Esophagus squamous epithelium (tissue), 5 donors: ENCODE measurements at regions of chr10 and their contacts with region 1.

Region 1: GRCh38 chr10:34985823-34986222 is 104.3 kb downstream of the CUL2 start:
- DNase-seq: no peak
- H3K4me3 ChIP-seq: no peak overlapping the region
- H3K27ac ChIP-seq: no peak overlapping the region
- H3K4me1 ChIP-seq: peaks cover 3 to 39% (median 6%) of the 10 kb centered on the region in 3 donors
- H3K27me3 ChIP-seq: no peaks in the 10 kb centered on the region
- CTCF ChIP-seq: peak in 2 of 6 experiments; percentile 35 to 45
- POLR2A ChIP-seq: no peak

Region 2: DNA sequence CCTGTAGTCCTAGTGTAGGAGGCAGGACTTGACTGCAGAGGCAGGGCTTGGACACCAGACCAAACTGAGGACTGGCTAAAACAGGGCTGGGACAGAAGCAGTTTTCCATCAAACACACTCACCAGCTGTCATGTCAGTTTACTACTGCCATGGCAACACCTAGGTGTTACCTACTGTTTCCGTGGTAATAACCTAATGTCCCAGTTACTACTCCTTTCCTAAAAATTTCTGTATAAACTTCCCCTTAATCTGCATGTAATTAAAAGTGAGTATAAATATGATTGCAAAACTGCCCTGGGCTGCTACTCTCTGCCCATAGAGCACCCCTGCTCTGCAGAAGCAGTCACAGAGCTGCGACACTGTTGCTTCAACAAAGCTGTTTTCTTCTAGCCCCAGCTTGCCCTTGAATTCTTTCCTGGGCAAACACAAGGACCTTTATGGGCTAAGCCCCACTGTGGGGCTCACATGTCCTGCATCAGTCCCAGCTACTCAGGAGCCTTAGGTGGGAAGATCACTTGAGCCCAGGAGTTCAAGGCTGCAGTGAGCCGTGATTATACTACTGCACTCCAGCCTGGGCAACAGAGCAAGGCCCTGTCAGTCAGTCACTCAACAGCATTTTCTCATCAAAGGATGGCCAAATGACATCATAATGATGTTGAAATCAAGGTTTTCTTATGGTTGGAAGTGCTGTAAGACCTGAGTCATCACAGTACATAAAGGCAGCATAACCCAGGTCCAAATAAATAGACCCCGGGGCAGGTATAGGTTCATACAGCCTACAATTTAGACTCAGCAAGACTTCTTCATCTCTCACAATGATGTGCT is 512.0 kb before region 1 on chr10:
- intact Hi-C with region 1: no loop called
- DNase-seq: no peak
- H3K4me3 ChIP-seq: no peak overlapping the region
- H3K27ac ChIP-seq: no peak overlapping the region
- H3K4me1 ChIP-seq: peaks cover 0 to 10% (median 0%) of the 10 kb centered on the region in 3 donors
- H3K27me3 ChIP-seq: no peaks in the 10 kb centered on the region
- CTCF ChIP-seq: no peak
- POLR2A ChIP-seq: no peak

Region 3: GRCh38 chr10:34666008-34666705 is 319.7 kb before region 1 on chr10:
- intact Hi-C with region 1: loop called (anchors 10 kb)
- DNase-seq: no peak
- H3K4me3 ChIP-seq: no peak overlapping the region
- H3K27ac ChIP-seq: peak overlapping the region; percentile 55 to 81 (median 62)
- H3K4me1 ChIP-seq: peaks cover 5 to 63% (median 9%) of the 10 kb centered on the region in 3 donors
- H3K27me3 ChIP-seq: no peaks in the 10 kb centered on the region
- CTCF ChIP-seq: peak in 5 of 6 experiments; percentile 31 to 66 (median 47)
- POLR2A ChIP-seq: no peak

Region 4: GRCh38 chr10:34933676-34934075 is 52.1 kb before region 1 on chr10:
- intact Hi-C with region 1: no loop called
- DNase-seq: no peak
- H3K4me3 ChIP-seq: no peak overlapping the region
- H3K27ac ChIP-seq: peak overlapping the region in 2 of 4 donors; percentile 67 to 81
- H3K4me1 ChIP-seq: peaks cover 0 to 29% (median 8%) of the 10 kb centered on the region in 3 donors
- H3K27me3 ChIP-seq: no peaks in the 10 kb centered on the region
- CTCF ChIP-seq: no peak
- POLR2A ChIP-seq: no peak

Region 5: DNA sequence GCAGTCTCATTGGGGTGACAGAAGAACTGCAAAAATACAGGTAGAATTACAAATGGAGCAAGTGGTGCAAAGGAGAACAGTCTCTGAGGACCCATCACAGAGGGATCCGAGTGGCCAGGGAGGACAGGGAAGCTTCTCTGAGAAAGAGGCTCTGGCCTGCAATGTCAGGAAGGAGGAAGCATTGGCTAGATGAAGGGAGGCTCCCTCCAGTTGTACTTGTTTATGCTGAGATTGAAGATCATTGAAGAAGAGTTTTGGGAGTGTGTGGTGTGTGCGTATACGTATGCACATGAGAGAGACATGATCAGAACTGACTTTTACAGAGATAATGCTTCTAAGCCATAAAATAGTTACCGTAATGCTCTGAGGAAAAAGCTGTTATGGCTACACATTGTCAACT is 931.0 kb after region 1 on chr10:
- intact Hi-C with region 1: no loop called
- DNase-seq: no peak
- H3K4me3 ChIP-seq: no peak overlapping the region
- H3K27ac ChIP-seq: no peak overlapping the region
- H3K4me1 ChIP-seq: peaks cover 0 to 8% (median 0%) of the 10 kb centered on the region in 3 donors
- H3K27me3 ChIP-seq: no peaks in the 10 kb centered on the region
- CTCF ChIP-seq: no peak
- POLR2A ChIP-seq: no peak